Activated T-helper 1 cell treated with anti-CD3 and anti-CD28 coated beads, Interleukin-12 subunit alpha, Interleukin-12 subunit beta, Interleukin-2, Interleukin-4 antibody, amounts not matched to agents 30 ng/mL and 10 ng/mL and 1 ng/mL, durations not matched to agents 14 hours and 24 hours and 36 hours (primary cell): ENCODE measurements at regions of chr10 and their contacts with region 1.

Region 1: DNA sequence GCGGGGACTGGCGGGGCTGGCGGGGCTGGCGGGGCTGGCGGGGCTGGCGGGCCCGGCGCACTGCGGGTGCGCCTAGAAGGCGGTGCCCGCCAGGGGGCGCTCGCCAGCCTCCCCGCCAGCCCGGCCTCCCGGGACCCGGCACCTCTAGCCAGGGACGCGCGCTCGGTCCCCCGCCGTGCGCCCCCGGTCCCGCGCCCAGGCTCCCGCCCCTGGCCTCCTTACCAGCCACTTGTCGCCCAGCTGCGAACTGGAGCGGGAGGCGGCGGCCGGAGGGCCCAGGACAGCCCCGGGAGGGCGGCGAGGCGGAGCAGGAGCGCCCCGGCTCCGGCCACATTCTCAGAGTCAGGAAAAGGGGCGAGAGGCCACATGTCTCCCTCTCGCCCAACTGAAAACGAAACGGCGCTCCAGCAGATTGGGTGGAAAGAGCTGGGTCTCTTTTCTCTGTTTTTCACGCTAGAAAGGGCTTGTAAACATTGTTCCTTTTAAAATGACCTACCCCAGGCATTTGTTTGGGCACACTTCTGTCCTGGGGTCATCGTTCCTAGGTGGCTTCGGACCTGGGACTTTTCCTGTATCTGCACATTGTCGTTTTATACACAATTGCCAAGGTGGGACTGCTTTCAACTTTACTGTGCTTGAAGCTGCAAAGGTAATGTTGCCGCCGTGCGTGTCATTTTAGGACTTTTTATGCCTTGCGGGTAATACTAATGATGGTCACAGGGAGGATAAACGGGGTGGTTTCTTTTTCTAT is 378 bp upstream of the PRKCQ start:
- DNase-seq: peak; percentile 80
- H3K4me3 Mint-ChIP-seq: peak overlapping the region; percentile 98
- H3K27ac Mint-ChIP-seq: peak overlapping the region; percentile 99
- H3K4me1 Mint-ChIP-seq: peaks cover 77% of the 10 kb centered on the region
- H3K27me3 Mint-ChIP-seq: no peaks in the 10 kb centered on the region

Region 2: GRCh38 chr10:6202684-6203330 is 377.6 kb before region 1 on chr10 and contains the start of gene PFKFB3:
- intact Hi-C with region 1: loop called (anchors 5 kb)
- DNase-seq: peak; percentile 92
- H3K4me3 Mint-ChIP-seq: peak within 1 kb of the TSS; percentile 96
- H3K27ac Mint-ChIP-seq: peak within 1 kb of the TSS; percentile 92
- H3K4me1 Mint-ChIP-seq: peaks cover 46% of the 10 kb centered on the region
- H3K27me3 Mint-ChIP-seq: no peaks in the 10 kb centered on the region
- total RNA-seq, gene PFKFB3: 90.3 and 93.8 TPM in 2 replicates

Region 3: GRCh38 chr10:6473901-6474370 is 106.5 kb before region 1 on chr10:
- intact Hi-C with region 1: loop called (anchors 1 kb)
- DNase-seq: peak; percentile 44
- H3K4me3 Mint-ChIP-seq: peak overlapping the region; percentile 86
- H3K27ac Mint-ChIP-seq: peak overlapping the region; percentile 97
- H3K4me1 Mint-ChIP-seq: peaks cover 89% of the 10 kb centered on the region
- H3K27me3 Mint-ChIP-seq: no peaks in the 10 kb centered on the region

Region 4: GRCh38 chr10:6514844-6515780 is 65.3 kb before region 1 on chr10:
- intact Hi-C with region 1: loop called (anchors 1 kb)
- DNase-seq: no peak
- H3K4me3 Mint-ChIP-seq: no peak overlapping the region
- H3K27ac Mint-ChIP-seq: no peak overlapping the region
- H3K4me1 Mint-ChIP-seq: peaks cover 90% of the 10 kb centered on the region
- H3K27me3 Mint-ChIP-seq: peaks cover 2% of the 10 kb centered on the region

Region 5: DNA sequence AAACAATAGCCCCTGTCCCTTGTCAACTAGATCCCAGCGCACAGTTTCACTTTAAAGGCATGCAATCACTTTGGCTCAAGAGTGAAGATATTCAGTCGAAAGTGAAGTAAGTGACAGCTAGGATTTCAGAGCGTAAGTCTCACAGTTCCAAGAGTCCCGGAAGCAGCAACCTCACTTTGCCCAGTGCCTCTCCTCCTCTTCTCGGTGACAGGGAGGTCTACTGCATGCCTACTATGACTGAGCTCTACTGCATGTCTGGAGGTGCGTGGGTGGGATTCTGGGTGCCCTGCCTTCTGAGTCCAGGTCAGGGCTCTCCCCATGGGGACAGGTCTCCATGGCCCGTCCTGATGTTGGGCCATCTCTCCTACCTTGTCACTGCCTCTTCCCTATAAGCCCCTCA is 17.4 kb before region 1 on chr10:
- intact Hi-C with region 1: loop called (anchors 1 kb)
- DNase-seq: peak; percentile 43
- H3K4me3 Mint-ChIP-seq: peak overlapping the region; percentile 74
- H3K27ac Mint-ChIP-seq: peak overlapping the region; percentile 81
- H3K4me1 Mint-ChIP-seq: peaks cover 81% of the 10 kb centered on the region
- H3K27me3 Mint-ChIP-seq: no peaks in the 10 kb centered on the region

Region 6: DNA sequence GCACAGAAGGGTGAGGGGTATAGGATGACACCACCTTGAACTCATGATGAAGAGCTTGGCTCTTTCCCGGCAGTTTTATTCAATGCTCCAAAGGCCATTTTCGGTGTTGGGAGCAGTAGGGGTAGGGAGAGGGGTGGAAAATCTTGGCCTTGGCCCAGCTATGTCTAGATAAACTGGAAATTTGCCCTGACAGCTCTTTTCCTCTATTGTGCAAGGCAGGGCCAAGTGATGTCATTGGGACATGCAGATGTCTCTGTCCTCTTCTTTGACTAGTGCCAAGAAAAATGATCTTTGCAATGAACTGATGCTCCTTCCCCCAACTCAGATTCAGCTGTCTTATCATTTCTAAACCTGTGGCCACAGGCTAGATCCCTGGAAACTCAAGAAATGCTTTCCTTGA is 27.3 kb after region 1 on chr10:
- intact Hi-C with region 1: loop called (anchors 1 kb)
- DNase-seq: no peak
- H3K4me3 Mint-ChIP-seq: no peak overlapping the region
- H3K27ac Mint-ChIP-seq: peak overlapping the region; percentile 69
- H3K4me1 Mint-ChIP-seq: peaks cover 91% of the 10 kb centered on the region
- H3K27me3 Mint-ChIP-seq: no peaks in the 10 kb centered on the region

Region 7: GRCh38 chr10:7410862-7411670 is 830.6 kb after region 1 on chr10 and contains the start of gene SFMBT2:
- intact Hi-C with region 1: loop called (anchors 5 kb)
- DNase-seq: peak; percentile 64
- H3K4me3 Mint-ChIP-seq: peak within 1 kb of the TSS; percentile 96
- H3K27ac Mint-ChIP-seq: peak within 1 kb of the TSS; percentile 96
- H3K4me1 Mint-ChIP-seq: peaks cover 38% of the 10 kb centered on the region
- H3K27me3 Mint-ChIP-seq: peaks cover 35% of the 10 kb centered on the region
- total RNA-seq, gene SFMBT2: 38.3 and 39.1 TPM in 2 replicates